Activated CD8-positive, alpha-beta T cell treated with anti-CD3 and anti-CD28 coated beads, Interleukin-2, amount 10 ng/mL, durations not matched to agents 7 days and 5 days (primary cell): ENCODE measurements at regions of chr4 and their contacts with region 1.

Region 1: DNA sequence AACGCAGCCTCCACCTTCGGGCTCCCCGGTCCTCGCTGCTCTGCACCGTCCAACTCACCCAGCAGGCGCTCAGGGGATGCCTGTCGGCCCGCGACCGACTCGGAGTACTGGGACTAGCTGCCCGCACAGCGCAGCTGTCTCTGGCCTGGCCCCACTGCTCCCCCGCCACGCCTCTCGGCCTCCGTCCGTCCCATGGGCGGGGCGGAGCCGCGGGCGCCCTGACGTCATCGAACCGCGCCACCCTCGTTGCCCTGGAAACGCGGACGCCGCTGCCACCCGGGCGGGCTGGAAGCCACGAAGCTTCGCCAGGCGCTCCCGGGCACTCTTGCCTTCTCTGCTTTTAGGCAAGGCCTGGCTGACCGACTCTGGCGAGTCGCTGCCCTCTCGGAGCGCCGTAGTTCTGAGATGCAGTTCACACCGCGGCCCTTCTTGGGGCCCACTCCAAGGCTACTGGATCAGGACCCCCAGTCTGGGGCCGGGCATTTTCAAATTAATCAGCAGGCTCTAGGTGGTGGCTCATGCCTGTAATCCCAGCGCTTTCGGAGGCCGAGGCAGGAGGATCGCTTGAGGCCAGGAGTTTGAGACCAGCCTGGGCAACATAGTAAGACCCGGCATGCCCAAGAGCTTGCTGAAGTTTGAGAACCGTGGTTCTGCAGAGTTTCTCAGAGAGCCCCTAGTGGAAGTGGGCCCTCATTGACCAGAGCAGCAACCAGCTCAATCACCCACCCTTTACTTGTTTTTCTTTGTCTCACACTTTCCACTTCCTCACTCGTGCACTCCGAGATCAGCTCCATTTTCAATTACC is 12.0 kb downstream of the ACOX3 start:
- DNase-seq: peak; percentile 91
- ATAC-seq: peak; percentile 98
- H3K4me3 Mint-ChIP-seq: peak overlapping the region; percentile 95
- H3K27ac Mint-ChIP-seq: peak overlapping the region; percentile 93
- H3K4me1 Mint-ChIP-seq: peaks cover 19% of the 10 kb centered on the region
- H3K27me3 Mint-ChIP-seq: no peaks in the 10 kb centered on the region

Region 2: GRCh38 chr4:8440492-8441341 is 12.2 kb after region 1 on chr4 and contains the starts of genes ACOX3 and TRMT44:
- CTCF ChIA-PET with region 1: interaction called, 8 read pairs
- POLR2A ChIA-PET with region 1: interaction called, 31 read pairs
- DNase-seq: peak; percentile 93
- ATAC-seq: peak; percentile 92
- H3K4me3 Mint-ChIP-seq: peak within 1 kb of the TSS; percentile 94
- H3K27ac Mint-ChIP-seq: peak within 1 kb of the TSS; percentile 98
- H3K4me1 Mint-ChIP-seq: peaks cover 69% of the 10 kb centered on the region
- H3K27me3 Mint-ChIP-seq: no peaks in the 10 kb centered on the region
- total RNA-seq, gene ACOX3: 13.2 to 13.6 TPM
- total RNA-seq, gene TRMT44: 18.5 to 22.2 TPM